ENCODE measurements at regions of chr6 and their contacts with region 1.

Region 1: GRCh38 chr6:144104898-144105487 is 9.6 kb upstream of the SF3B5 start:
- DNase-seq: no peak
- ATAC-seq: peak; percentile 91

Region 2: GRCh38 chr6:144149891-144150709 is 45.1 kb after region 1 on chr6 and contains the start of gene STX11:
- intact Hi-C with region 1: loop called (anchors 10 kb)
- DNase-seq: peak; percentile 89
- ATAC-seq: peak; percentile 98
- total RNA-seq, gene STX11: 7.8 TPM

Region 3: DNA sequence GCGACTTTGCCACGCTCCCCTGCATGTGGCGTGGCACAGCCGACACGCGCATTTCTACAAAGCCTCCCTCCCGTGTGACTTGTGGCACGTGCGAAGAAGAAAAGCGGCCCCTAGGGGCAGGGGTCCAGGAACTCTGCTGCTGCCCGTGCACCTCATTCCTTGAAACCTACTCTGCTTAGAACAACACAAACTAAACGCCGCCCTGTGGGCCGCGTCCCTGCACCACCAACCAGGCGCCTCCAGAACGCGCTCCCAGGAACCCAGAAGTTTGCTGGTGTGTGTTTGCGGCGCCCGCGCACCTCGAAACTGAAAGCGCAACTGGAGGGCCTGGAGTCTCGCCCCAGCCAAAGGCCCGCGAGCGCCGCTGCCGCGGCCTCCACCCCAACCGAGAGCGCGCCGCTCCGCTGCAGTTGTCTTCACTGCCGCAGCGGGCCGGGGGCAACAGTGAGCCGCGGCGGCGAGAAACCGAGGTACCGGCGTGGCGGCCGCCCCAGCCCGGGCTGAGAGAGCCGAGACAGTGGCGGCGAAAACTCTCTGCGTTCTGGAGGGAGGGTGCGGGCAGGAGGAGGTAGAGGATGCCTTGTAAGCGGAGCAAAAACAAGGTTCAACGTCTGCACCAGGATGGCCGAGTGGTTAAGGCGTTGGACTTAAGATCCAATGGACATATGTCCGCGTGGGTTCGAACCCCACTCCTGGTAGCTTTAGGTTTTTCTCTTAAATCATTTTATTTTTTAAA is 111.1 kb after region 1 on chr6:
- intact Hi-C with region 1: loop called (anchors 2 kb)
- DNase-seq: peak; percentile 94
- ATAC-seq: peak; percentile 95

Region 4: DNA sequence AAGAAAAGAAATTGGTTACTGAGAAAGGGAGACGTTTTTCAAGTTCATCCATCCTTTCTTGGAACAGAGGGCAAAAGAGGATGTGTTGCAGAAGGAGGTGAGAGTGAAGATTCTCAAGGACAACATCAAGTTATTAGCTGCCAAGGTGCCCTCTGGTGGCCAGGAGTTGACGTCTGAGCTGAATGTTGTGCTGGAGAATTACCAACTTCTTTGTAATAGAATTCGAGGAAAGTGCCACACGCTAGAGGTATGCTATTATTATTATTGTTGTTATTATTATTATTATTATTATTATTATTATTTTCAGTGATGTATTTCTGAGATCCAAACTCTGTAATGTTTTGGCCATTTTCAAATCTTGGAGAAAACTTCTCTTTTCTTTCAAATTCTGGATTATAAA is 377.1 kb after region 1 on chr6:
- intact Hi-C with region 1: loop called (anchors 10 kb)
- DNase-seq: peak; percentile 83
- ATAC-seq: peak; percentile 22

Measured in left ventricle myocardium superior (tissue), 1 donor.